ENCODE measurements at regions of chr1 and their contacts with region 1.

Region 1: DNA sequence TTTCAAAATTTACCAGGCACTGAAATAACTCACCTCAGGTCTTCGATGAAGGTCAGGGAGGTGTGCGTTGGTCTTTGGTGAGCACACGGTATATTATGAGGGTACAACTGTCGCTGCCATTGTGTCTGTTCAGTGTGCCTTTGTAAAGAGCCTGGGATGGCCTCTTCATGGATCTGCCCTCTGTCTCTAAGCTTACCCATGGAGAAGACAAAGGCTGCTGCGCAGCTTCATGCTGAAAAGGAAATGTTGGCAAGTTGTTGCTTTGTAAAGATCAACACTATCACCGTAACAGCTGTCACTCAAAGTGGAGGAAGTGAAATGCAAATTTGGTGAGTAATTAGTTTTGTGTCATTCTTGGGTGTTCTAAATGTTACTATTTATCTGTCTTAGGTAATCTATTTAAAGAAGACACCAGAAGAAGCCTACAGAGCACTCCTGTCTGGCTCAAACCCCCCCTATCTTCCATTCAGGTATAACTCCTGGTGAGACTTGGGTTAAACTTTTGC is 71.6 kb downstream of the CDC14A start:
- DNase-seq: no peak
- ATAC-seq: peak; percentile 29
- H3K4me3 Mint-ChIP-seq: no peak overlapping the region
- H3K27ac Mint-ChIP-seq: no peak overlapping the region
- H3K4me1 Mint-ChIP-seq: peaks cover 31% of the 10 kb centered on the region
- H3K27me3 Mint-ChIP-seq: no peaks in the 10 kb centered on the region
- CTCF ChIP-seq: no peak

Region 2: DNA sequence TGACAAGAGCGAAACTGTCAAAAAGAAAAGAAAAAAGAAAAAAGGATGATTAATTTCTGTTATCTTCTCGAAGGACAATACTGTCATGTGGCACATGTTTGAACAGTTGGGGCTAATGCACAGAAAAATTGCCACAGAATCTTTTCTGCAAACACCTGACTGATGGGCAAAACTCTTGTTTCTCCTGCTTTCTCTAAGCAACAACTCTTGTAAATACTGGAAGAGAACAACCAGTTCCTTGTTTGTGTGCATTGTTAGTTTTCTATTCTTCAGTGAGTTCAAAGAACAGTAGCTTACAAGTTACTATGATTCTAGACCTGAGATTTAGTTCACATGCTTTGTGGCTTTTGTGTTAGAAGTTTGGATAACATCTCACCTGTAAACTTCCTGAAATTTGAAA is 10.8 kb before region 1 on chr1:
- CTCF ChIA-PET with region 1: interaction called, 12 read pairs
- POLR2A ChIA-PET with region 1: no interaction called
- DNase-seq: no peak
- ATAC-seq: no peak
- H3K4me3 Mint-ChIP-seq: no peak overlapping the region
- H3K27ac Mint-ChIP-seq: no peak overlapping the region
- H3K4me1 Mint-ChIP-seq: peaks cover 28% of the 10 kb centered on the region
- H3K27me3 Mint-ChIP-seq: no peaks in the 10 kb centered on the region
- CTCF ChIP-seq: no peak

Region 3: GRCh38 chr1:100440075-100440809 is 16.4 kb after region 1 on chr1:
- CTCF ChIA-PET with region 1: interaction called, 11 read pairs
- POLR2A ChIA-PET with region 1: interaction called, 3 read pairs
- DNase-seq: no peak
- ATAC-seq: peak; percentile 52; the same call in 1 of the 2 replicates
- H3K4me3 Mint-ChIP-seq: no peak overlapping the region
- H3K27ac Mint-ChIP-seq: peak overlapping the region; percentile 34; the same call in 1 of the 2 replicates
- H3K4me1 Mint-ChIP-seq: peaks cover 34% of the 10 kb centered on the region
- H3K27me3 Mint-ChIP-seq: no peaks in the 10 kb centered on the region
- CTCF ChIP-seq: no peak

Region 4: DNA sequence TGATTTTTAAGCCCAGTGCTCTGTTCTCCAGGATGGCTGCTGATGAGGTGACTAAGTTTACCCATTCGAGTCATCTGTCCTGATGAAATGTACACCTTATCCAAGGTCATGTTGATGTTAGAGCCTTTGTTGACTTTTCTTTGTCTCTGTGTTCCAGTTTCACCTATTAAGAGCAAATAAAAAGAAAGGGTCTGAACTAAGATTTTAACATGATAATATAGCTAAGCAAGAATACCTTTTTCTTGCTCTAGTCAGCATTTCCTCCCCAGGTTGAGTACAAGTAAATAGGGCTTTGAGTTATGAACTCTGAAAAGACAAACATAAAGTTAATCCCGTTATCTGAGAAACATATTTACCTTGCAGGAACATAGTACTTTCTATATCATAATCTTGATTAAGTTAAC is 62.0 kb after region 1 on chr1:
- CTCF ChIA-PET with region 1: no interaction called
- POLR2A ChIA-PET with region 1: no interaction called
- DNase-seq: no peak
- ATAC-seq: no peak
- H3K4me3 Mint-ChIP-seq: no peak overlapping the region
- H3K27ac Mint-ChIP-seq: no peak overlapping the region
- H3K4me1 Mint-ChIP-seq: peaks cover 4% of the 10 kb centered on the region; the same call in 1 of the 2 replicates
- H3K27me3 Mint-ChIP-seq: no peaks in the 10 kb centered on the region
- CTCF ChIP-seq: no peak

Region 5: GRCh38 chr1:100683448-100684349 is 259.8 kb after region 1 on chr1:
- CTCF ChIA-PET with region 1: no interaction called
- POLR2A ChIA-PET with region 1: no interaction called
- DNase-seq: no peak
- ATAC-seq: no peak
- H3K4me3 Mint-ChIP-seq: no peak overlapping the region
- H3K27ac Mint-ChIP-seq: no peak overlapping the region
- H3K4me1 Mint-ChIP-seq: no peaks in the 10 kb centered on the region
- H3K27me3 Mint-ChIP-seq: peaks cover 3% of the 10 kb centered on the region; the same call in 1 of the 2 replicates
- CTCF ChIP-seq: no peak

Measured in WTC11 (cell line).